GM12878 (cell line): ENCODE measurements at regions of chr2 and their contacts with region 1.

Region 1: GRCh38 chr2:196277002-196277401 is 105.6 kb upstream of the STK17B start:
- DNase-seq: no peak
- ATAC-seq: peak; percentile 48
- H3K4me3 ChIP-seq: no peak overlapping the region
- H3K27ac ChIP-seq: no peak overlapping the region
- H3K4me1 ChIP-seq: peaks cover 27% of the 10 kb centered on the region
- H3K27me3 ChIP-seq: no peaks in the 10 kb centered on the region
- CTCF ChIP-seq: peak; percentile 61 to 72 (median 66); a peak in 5 of 6 replicates
- EP300 ChIP-seq: no peak
- POLR2A ChIP-seq: no peak
- RAD21 ChIP-seq: peak; percentile 82

Region 2: DNA sequence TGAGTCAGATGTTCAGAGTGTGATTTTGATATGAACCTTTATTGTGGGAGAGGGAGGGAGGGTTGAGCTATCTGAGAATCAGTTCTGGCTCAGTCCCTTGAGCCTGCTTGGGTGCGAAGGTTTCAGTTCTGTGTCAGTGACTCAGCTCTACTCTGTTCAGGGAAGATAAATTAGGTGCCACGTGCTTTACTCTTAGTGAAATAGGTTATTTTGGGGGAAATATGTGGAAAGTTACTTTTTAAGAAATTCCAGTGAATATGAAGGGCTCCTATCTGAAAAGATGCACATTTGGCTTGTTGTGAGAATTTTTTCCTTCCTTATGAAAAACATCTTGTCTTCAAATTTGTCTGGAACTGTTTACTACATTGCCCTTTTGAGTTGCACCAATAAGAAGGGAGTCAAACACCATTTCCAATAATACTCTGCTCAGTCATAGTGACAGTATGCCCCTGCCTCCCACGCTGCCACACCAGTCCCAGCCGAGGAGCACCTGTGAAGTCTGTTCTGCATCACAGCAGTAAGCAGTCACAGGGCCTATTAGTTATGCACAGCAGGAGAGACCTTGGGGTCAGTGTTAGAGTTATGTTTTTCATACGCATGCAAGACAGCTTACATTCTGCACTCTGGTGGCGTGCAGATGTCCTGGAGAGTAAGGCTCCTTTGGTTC is 175.5 kb before region 1 on chr2:
- CTCF ChIA-PET with region 1: interaction called, 9 read pairs
- POLR2A ChIA-PET with region 1: interaction called, 10 read pairs
- RAD21 ChIA-PET with region 1: interaction called, 52 read pairs
- SMC1A ChIA-PET with region 1: interaction called, 32 read pairs
- in situ Hi-C with region 1: no loop called
- intact Hi-C with region 1: no loop called
- DNase-seq: peak; percentile 80
- ATAC-seq: peak; percentile 96
- H3K4me3 ChIP-seq: no peak overlapping the region
- H3K27ac ChIP-seq: peak overlapping the region; percentile 34
- H3K4me1 ChIP-seq: peaks cover 24% of the 10 kb centered on the region
- H3K27me3 ChIP-seq: no peaks in the 10 kb centered on the region
- CTCF ChIP-seq: peak in 1 of 3 experiments; percentile 14; a peak in 1 of 6 replicates
- EP300 ChIP-seq: peak; percentile 57 to 74
- POLR2A ChIP-seq: 0 out of 2 replicates have a peak, but pooled peaks have one; percentile 16
- RAD21 ChIP-seq: peak; percentile 26; the same call in 1 of the 2 replicates

Region 3: GRCh38 chr2:196160101-196160500 is 116.9 kb before region 1 on chr2:
- CTCF ChIA-PET with region 1: interaction called, 34 read pairs
- POLR2A ChIA-PET with region 1: interaction called, 8 read pairs
- RAD21 ChIA-PET with region 1: interaction called, 95 read pairs
- SMC1A ChIA-PET with region 1: interaction called, 42 read pairs
- in situ Hi-C with region 1: loop called (anchors 25 kb)
- intact Hi-C with region 1: no loop called
- DNase-seq: peak; percentile 86
- ATAC-seq: peak; percentile 64
- H3K4me3 ChIP-seq: no peak overlapping the region; the same call in 1 of the 2 replicates
- H3K27ac ChIP-seq: peak overlapping the region; percentile 77
- H3K4me1 ChIP-seq: peaks cover 29% of the 10 kb centered on the region
- H3K27me3 ChIP-seq: no peaks in the 10 kb centered on the region
- CTCF ChIP-seq: no peak
- EP300 ChIP-seq: peak; percentile 93
- POLR2A ChIP-seq: no peak
- RAD21 ChIP-seq: peak; percentile 17; the same call in 1 of the 2 replicates

Region 4: GRCh38 chr2:196200557-196200956 is 76.4 kb before region 1 on chr2:
- CTCF ChIA-PET with region 1: interaction called, 5 read pairs
- POLR2A ChIA-PET with region 1: interaction called, 4 read pairs
- RAD21 ChIA-PET with region 1: interaction called, 21 read pairs
- SMC1A ChIA-PET with region 1: interaction called, 26 read pairs
- in situ Hi-C with region 1: no loop called
- intact Hi-C with region 1: no loop called
- DNase-seq: peak; percentile 83
- ATAC-seq: peak; percentile 94
- H3K4me3 ChIP-seq: no peak overlapping the region
- H3K27ac ChIP-seq: peak overlapping the region; percentile 79
- H3K4me1 ChIP-seq: peaks cover 18% of the 10 kb centered on the region
- H3K27me3 ChIP-seq: no peaks in the 10 kb centered on the region
- CTCF ChIP-seq: no peak
- EP300 ChIP-seq: peak; percentile 64 to 65
- POLR2A ChIP-seq: no peak
- RAD21 ChIP-seq: no peak

Region 5: DNA sequence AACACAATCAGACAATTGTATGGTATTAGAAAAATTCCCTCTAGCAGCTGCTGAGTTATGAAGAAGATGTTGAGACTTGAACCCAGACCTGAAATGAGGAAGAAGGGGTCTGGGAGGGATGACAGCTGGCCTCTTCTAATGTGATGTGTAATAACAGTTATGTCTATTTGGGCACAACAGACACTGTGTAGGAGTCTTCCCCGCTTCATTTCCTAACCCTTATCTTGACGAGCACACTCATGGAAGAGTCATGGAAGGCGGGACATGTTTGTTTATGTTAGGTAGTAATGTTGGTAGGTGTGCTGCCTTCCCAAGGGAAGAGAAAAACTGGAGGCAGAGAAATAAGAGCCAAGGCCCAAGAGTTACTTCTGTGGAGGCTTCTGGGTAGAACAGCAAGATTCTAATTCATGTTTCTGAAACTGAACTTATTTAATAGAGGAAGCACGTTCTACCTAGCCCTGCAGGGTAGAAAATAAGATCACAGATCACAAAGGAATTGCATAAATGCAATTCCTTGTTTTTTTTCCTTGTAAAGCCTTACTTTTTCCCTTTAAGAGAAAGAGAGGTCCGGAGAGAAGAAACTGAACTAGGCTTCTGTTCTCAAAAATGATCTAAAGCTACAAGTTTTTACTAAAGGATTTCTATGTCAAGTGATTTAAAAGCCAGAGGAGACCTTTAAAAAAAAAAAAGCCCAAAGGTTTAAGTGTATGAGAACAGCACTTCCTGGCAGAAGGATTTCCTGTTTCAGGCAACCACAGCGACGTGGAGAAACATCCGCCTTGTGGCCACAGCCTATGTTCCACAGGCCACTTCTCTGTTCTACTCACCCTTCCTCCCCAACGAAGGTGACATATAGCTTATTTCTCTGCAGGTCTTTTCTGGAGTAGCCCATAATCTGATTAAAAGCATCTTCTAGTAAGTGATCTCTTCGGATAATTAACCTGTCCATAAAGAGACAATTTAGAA is 37.1 kb before region 1 on chr2:
- CTCF ChIA-PET with region 1: interaction called, 45 read pairs
- POLR2A ChIA-PET with region 1: interaction called, 20 read pairs
- RAD21 ChIA-PET with region 1: interaction called, 102 read pairs
- SMC1A ChIA-PET with region 1: interaction called, 84 read pairs
- in situ Hi-C with region 1: no loop called
- intact Hi-C with region 1: loop called (anchors 2 kb)
- DNase-seq: peak; percentile 86
- ATAC-seq: peak; percentile 79
- H3K4me3 ChIP-seq: no peak overlapping the region
- H3K27ac ChIP-seq: peak overlapping the region; percentile 75
- H3K4me1 ChIP-seq: peaks cover 36% of the 10 kb centered on the region
- H3K27me3 ChIP-seq: no peaks in the 10 kb centered on the region
- CTCF ChIP-seq: 0 out of 6 replicates have a peak, but pooled peaks of 1 of the 3 experiments have one; percentile 3
- EP300 ChIP-seq: peak; percentile 74 to 85
- POLR2A ChIP-seq: no peak
- RAD21 ChIP-seq: 0 out of 2 replicates have a peak, but pooled peaks have one; percentile 19

Region 6: DNA sequence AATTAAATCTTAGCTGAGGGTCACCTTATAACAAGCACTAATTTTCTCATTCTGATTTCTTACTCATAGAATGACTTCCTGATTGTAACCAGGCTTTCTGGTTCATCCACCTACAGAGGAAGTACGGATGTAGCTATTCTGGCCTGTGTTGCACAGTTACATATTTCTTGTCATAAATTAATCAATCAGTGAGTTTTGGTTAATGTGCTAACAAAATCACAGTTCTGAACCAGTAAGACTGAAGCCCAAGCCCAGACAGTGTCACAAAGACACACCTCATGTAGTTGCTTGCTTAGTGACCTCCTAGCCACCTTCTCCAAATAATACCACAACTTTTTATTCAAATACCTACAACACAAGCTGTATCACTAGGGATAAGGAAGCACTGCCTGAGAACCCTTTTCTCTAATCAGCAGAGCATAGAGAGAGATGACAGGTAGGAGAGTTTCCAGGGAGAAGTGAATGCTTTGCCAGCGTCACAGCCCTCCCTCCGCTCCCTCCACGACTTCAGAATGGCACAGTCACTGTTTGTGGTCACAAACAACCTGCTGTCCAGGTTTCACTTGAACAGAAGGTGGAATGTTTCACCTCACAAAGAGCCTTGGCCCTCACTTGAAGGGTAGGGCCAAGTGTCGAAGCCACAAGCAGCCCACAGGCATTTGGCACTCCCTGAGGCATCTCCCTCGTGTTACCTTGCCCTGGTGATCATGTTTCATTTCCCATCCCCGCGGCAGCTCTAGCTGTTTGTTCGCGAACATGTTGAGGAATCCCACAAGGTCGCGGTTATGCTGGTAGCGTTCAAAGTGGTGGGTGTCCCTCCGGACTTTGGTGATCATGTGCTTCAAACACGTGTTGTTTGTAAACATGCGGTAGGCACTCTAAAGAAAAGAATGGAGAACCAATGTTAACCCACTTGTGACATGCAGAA is 15.1 kb after region 1 on chr2:
- CTCF ChIA-PET with region 1: interaction called, 4 read pairs
- POLR2A ChIA-PET with region 1: interaction called, 5 read pairs
- RAD21 ChIA-PET with region 1: interaction called, 8 read pairs
- SMC1A ChIA-PET with region 1: interaction called, 11 read pairs
- in situ Hi-C with region 1: no loop called
- intact Hi-C with region 1: no loop called
- DNase-seq: no peak
- ATAC-seq: peak; percentile 10
- H3K4me3 ChIP-seq: no peak overlapping the region
- H3K27ac ChIP-seq: peak overlapping the region; percentile 51; the same call in 1 of the 2 replicates
- H3K4me1 ChIP-seq: peaks cover 32% of the 10 kb centered on the region
- H3K27me3 ChIP-seq: no peaks in the 10 kb centered on the region
- CTCF ChIP-seq: no peak
- EP300 ChIP-seq: no peak
- POLR2A ChIP-seq: no peak
- RAD21 ChIP-seq: no peak

Region 7: DNA sequence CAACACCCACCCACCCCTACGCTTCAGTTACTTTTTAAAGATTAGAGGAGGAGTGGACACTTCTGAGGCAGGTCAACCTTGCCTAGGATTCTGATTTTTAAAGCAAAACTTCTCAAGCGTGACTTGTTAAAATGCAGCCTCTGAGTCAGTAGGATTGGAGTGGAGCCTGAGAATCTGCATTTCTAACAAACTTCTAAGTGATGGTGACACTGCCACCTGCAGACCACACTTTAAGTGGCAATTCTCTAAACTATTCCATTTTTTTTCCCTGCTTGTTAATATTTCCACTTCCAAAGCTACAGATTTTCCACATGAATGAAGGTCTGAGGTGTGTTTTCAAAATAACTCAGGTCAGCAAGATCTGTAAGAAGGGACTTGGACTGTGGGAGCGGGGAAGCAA is 191.4 kb after region 1 on chr2:
- CTCF ChIA-PET with region 1: no interaction called
- POLR2A ChIA-PET with region 1: no interaction called
- RAD21 ChIA-PET with region 1: no interaction called
- SMC1A ChIA-PET with region 1: no interaction called
- in situ Hi-C with region 1: no loop called
- intact Hi-C with region 1: no loop called
- DNase-seq: no peak
- ATAC-seq: no peak
- H3K4me3 ChIP-seq: no peak overlapping the region
- H3K27ac ChIP-seq: no peak overlapping the region
- H3K4me1 ChIP-seq: no peaks in the 10 kb centered on the region
- H3K27me3 ChIP-seq: no peaks in the 10 kb centered on the region
- CTCF ChIP-seq: peak; percentile 5 to 24 (median 5); a peak in 1 of 6 replicates
- EP300 ChIP-seq: no peak
- POLR2A ChIP-seq: no peak
- RAD21 ChIP-seq: peak; percentile 53